Uterus (tissue), 4 donors: ENCODE measurements at regions of chr19 and their contacts with region 1.

Region 1: DNA sequence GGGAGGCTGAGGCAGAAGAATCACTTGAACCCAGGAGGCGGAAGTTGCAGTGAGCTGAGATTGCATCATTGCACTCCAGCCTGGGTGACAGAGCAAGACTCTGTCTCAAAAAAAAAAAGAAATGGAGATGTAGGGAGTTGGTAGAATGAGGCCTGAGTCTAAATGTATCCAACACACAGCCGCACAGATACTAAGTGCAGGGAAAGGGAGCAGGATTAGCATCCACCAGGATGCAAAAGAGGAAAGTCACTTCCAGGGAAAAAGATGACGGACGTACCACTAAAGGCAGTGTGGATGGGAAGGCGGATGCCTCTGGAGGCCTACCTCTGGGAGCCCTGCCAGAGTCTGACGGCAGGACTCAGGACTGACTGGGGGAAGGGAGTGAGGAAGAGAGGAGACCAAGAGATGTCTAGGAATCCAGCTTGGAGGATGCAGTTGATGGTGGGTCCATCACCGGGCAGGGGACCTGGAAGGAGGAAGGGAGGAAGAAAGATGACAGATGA is 6.8 kb downstream of the FAM98C start:
- DNase-seq: no peak
- H3K4me3 ChIP-seq: no peak overlapping the region
- H3K27ac ChIP-seq: no peak overlapping the region
- H3K4me1 ChIP-seq: no peaks in the 10 kb centered on the region
- H3K27me3 ChIP-seq: no peaks in the 10 kb centered on the region
- CTCF ChIP-seq: no peak
- POLR2A ChIP-seq: no peak

Region 2: GRCh38 chr19:38308926-38309614 is 100.6 kb before region 1 on chr19:
- intact Hi-C with region 1: no loop called
- DNase-seq: no peak
- H3K4me3 ChIP-seq: no peak overlapping the region
- H3K27ac ChIP-seq: no peak overlapping the region
- H3K4me1 ChIP-seq: no peaks in the 10 kb centered on the region
- H3K27me3 ChIP-seq: no peaks in the 10 kb centered on the region
- CTCF ChIP-seq: no peak
- POLR2A ChIP-seq: no peak

Region 3: GRCh38 chr19:38323291-38323690 is 86.4 kb before region 1 on chr19:
- intact Hi-C with region 1: no loop called
- DNase-seq: no peak
- H3K4me3 ChIP-seq: no peak overlapping the region
- H3K27ac ChIP-seq: peak overlapping the region in 1 of 2 donors; percentile 40
- H3K4me1 ChIP-seq: peaks cover 0 to 9% of the 10 kb centered on the region in 2 donors
- H3K27me3 ChIP-seq: no peaks in the 10 kb centered on the region
- CTCF ChIP-seq: no peak
- POLR2A ChIP-seq: no peak

Region 4: GRCh38 chr19:38619361-38620174 is 209.9 kb after region 1 on chr19:
- intact Hi-C with region 1: loop called (anchors 5 kb)
- DNase-seq: no peak
- H3K4me3 ChIP-seq: peak overlapping the region; percentile 67 to 90
- H3K27ac ChIP-seq: peak overlapping the region; percentile 69 to 79
- H3K4me1 ChIP-seq: no peaks in the 10 kb centered on the region
- H3K27me3 ChIP-seq: no peaks in the 10 kb centered on the region
- CTCF ChIP-seq: no peak
- POLR2A ChIP-seq: no peak